ENCODE measurements at regions of chr19 and their contacts with region 1.

Region 1: DNA sequence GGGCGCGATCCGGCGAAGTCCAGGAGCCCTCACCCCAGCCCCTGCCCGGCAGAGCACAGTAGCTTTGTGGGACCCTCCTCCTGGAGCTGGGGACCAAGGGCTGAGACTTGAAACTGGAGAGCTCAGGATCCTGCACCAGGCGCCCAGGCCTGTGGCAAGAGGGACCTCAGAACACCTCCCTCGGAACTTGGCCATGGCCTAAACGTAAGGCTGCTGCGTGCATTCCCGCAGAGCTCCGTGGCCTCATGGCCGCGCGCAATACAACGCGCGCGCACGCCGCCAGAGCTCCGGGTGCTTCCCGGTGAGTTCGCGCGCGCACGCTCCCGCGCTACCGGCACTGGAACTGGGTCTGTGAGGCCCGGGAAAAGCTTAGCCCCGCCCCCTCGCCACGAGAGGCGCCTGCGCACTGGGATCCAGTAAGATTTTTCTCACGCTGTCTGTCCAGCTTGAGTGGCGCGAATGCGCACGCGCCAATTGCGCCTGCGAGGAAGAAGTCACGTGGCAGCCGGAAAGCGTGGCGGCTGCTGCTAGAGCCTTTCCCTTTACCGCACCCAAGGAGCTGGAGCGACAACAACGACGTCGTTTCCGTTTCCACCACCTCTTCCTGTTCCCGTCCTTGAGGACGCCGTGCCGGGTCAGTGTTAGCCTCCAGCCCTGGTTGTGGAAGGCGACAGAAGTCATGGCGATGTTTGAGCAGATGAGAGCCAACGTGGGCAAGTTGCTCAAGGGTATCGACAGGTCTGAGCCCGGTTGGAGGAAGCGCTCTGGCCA is at the start of gene EIF3K:
- DNase-seq: peak; percentile 92 to 100 (median 96)
- ATAC-seq: peak; percentile 63
- H3K4me3 ChIP-seq: peak within 1 kb of the TSS; percentile 97
- H3K4me3 Mint-ChIP-seq: peak within 1 kb of the TSS; percentile 97
- H3K27ac ChIP-seq: peak within 1 kb of the TSS; percentile 84 to 94
- H3K27ac Mint-ChIP-seq: peak within 1 kb of the TSS; percentile 94
- H3K4me1 ChIP-seq: peaks cover 62% of the 10 kb centered on the region
- H3K4me1 Mint-ChIP-seq: peaks cover 59% of the 10 kb centered on the region
- H3K27me3 ChIP-seq: no peaks in the 10 kb centered on the region
- H3K27me3 Mint-ChIP-seq: no peaks in the 10 kb centered on the region
- CTCF ChIP-seq: no peak
- total RNA-seq, gene EIF3K: 309 to 322 TPM

Region 2: GRCh38 chr19:38514812-38515633 is 103.8 kb before region 1 on chr19:
- CTCF ChIA-PET with region 1: interaction called, 5 read pairs
- POLR2A ChIA-PET with region 1: interaction called, 4 read pairs
- intact Hi-C with region 1: loop called in 1 of 2 experiments (anchors 5 kb)
- DNase-seq: peak; percentile 62 to 88 (median 76)
- ATAC-seq: peak; percentile 98
- H3K4me3 ChIP-seq: no peak overlapping the region
- H3K4me3 Mint-ChIP-seq: no peak overlapping the region
- H3K27ac ChIP-seq: no peak overlapping the region
- H3K27ac Mint-ChIP-seq: no peak overlapping the region
- H3K4me1 ChIP-seq: peaks cover 15% of the 10 kb centered on the region
- H3K4me1 Mint-ChIP-seq: peaks cover 9% of the 10 kb centered on the region
- H3K27me3 ChIP-seq: no peaks in the 10 kb centered on the region
- H3K27me3 Mint-ChIP-seq: no peaks in the 10 kb centered on the region
- CTCF ChIP-seq: peak; percentile 94

Region 3: GRCh38 chr19:38538793-38539528 is 79.8 kb before region 1 on chr19:
- CTCF ChIA-PET with region 1: interaction called, 4 read pairs
- POLR2A ChIA-PET with region 1: interaction called, 22 read pairs
- intact Hi-C with region 1: loop called in 1 of 2 experiments (anchors 5 kb)
- DNase-seq: peak in 6 of 14 experiments; percentile 13 to 87 (median 68)
- ATAC-seq: peak; percentile 91
- H3K4me3 ChIP-seq: no peak overlapping the region
- H3K4me3 Mint-ChIP-seq: peak overlapping the region; percentile 46
- H3K27ac ChIP-seq: no peak overlapping the region
- H3K27ac Mint-ChIP-seq: peak overlapping the region; percentile 74
- H3K4me1 ChIP-seq: peaks cover 46% of the 10 kb centered on the region
- H3K4me1 Mint-ChIP-seq: peaks cover 48% of the 10 kb centered on the region
- H3K27me3 ChIP-seq: no peaks in the 10 kb centered on the region
- H3K27me3 Mint-ChIP-seq: no peaks in the 10 kb centered on the region
- CTCF ChIP-seq: no peak

Region 4: GRCh38 chr19:38544034-38544958 is 74.5 kb before region 1 on chr19:
- CTCF ChIA-PET with region 1: interaction called, 4 read pairs
- POLR2A ChIA-PET with region 1: interaction called, 22 read pairs
- intact Hi-C with region 1: loop called (anchors 5 kb)
- DNase-seq: peak in 5 of 14 experiments; percentile 12 to 85 (median 75)
- ATAC-seq: peak; percentile 92
- H3K4me3 ChIP-seq: no peak overlapping the region
- H3K4me3 Mint-ChIP-seq: no peak overlapping the region
- H3K27ac ChIP-seq: no peak overlapping the region
- H3K27ac Mint-ChIP-seq: peak overlapping the region; percentile 0
- H3K4me1 ChIP-seq: peaks cover 24% of the 10 kb centered on the region
- H3K4me1 Mint-ChIP-seq: peaks cover 24% of the 10 kb centered on the region
- H3K27me3 ChIP-seq: no peaks in the 10 kb centered on the region
- H3K27me3 Mint-ChIP-seq: no peaks in the 10 kb centered on the region
- CTCF ChIP-seq: peak; percentile 81

Region 5: DNA sequence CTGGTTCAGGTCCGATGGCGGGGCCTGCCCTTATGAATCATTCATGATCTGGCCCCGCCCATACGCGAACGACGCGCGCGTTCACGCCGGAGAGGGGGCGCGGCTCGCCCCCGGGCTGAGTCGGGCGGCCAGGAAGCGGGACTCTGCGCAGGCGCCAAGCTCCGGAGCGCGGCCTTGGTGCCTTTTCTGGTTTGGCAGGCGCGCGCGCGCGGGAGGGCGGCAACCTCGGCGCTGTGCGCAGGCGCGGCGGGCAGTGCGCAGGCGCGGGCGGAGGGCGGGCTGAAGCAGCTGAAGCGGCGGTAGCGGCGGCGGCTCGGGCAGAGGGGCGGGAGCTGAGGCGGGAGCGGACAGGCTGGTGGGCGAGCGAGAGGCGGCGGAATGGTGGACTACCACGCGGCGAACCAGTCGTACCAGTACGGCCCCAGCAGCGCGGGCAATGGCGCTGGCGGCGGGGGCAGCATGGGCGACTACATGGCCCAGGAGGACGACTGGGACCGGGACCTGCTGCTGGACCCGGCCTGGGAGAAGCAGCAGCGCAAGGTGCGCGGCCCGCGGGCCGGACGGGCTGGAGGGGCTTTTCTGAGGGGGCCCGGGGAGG is 28.7 kb after region 1 on chr19 and contains the start of gene ACTN4:
- CTCF ChIA-PET with region 1: no interaction called
- POLR2A ChIA-PET with region 1: interaction called, 13 read pairs
- intact Hi-C with region 1: loop called in 1 of 2 experiments (anchors 1 kb)
- DNase-seq: peak; percentile 99 to 100 (median 100)
- ATAC-seq: peak; percentile 92
- H3K4me3 ChIP-seq: peak within 1 kb of the TSS; percentile 96
- H3K4me3 Mint-ChIP-seq: peak within 1 kb of the TSS; percentile 85
- H3K27ac ChIP-seq: peak within 1 kb of the TSS; percentile 21 to 41
- H3K27ac Mint-ChIP-seq: peak within 1 kb of the TSS; percentile 75
- H3K4me1 ChIP-seq: peaks cover 50% of the 10 kb centered on the region
- H3K4me1 Mint-ChIP-seq: peaks cover 37% of the 10 kb centered on the region
- H3K27me3 ChIP-seq: peaks cover 3 to 9% of the 10 kb centered on the region in 2 experiments
- H3K27me3 Mint-ChIP-seq: peaks cover 37% of the 10 kb centered on the region
- CTCF ChIP-seq: no peak
- total RNA-seq, gene ACTN4: 70.3 to 84.0 TPM

Region 6: GRCh38 chr19:38739440-38740256 is 120.9 kb after region 1 on chr19:
- CTCF ChIA-PET with region 1: no interaction called
- POLR2A ChIA-PET with region 1: no interaction called
- intact Hi-C with region 1: no loop called
- DNase-seq: peak in 3 of 14 experiments; percentile 19 to 44 (median 33)
- ATAC-seq: no peak
- H3K4me3 ChIP-seq: no peak overlapping the region
- H3K4me3 Mint-ChIP-seq: peak overlapping the region; percentile 20
- H3K27ac ChIP-seq: no peak overlapping the region
- H3K27ac Mint-ChIP-seq: no peak overlapping the region
- H3K4me1 ChIP-seq: peaks cover 49% of the 10 kb centered on the region
- H3K4me1 Mint-ChIP-seq: peaks cover 35% of the 10 kb centered on the region
- H3K27me3 ChIP-seq: no peaks in the 10 kb centered on the region
- H3K27me3 Mint-ChIP-seq: peaks cover 5% of the 10 kb centered on the region
- CTCF ChIP-seq: no peak

Region 7: DNA sequence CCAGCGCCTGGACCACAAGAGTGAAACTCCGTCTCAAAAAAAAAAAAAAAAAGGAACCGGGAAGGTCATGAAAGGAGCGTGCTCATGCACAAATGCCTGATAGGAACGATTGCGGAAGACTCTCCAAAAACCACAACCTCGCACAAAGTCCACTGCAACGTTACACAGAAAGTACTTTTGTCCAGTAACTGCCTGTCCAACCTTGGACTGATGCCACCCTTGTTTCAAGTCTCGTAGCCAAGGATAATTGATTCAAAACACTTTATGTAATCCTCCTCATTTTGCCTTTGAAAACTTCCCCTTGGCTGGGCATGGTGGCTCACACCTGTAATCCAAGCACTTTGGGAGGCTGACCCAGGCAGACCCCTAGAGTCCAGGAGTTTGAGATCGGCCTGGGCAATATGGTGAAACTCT is 140.8 kb after region 1 on chr19:
- CTCF ChIA-PET with region 1: no interaction called
- POLR2A ChIA-PET with region 1: no interaction called
- intact Hi-C with region 1: no loop called
- DNase-seq: no peak
- ATAC-seq: no peak
- H3K4me3 ChIP-seq: no peak overlapping the region
- H3K4me3 Mint-ChIP-seq: no peak overlapping the region
- H3K27ac ChIP-seq: no peak overlapping the region
- H3K27ac Mint-ChIP-seq: no peak overlapping the region
- H3K4me1 ChIP-seq: peaks cover 7% of the 10 kb centered on the region
- H3K4me1 Mint-ChIP-seq: no peaks in the 10 kb centered on the region
- H3K27me3 ChIP-seq: no peaks in the 10 kb centered on the region
- H3K27me3 Mint-ChIP-seq: no peaks in the 10 kb centered on the region
- CTCF ChIP-seq: no peak

Region 8: DNA sequence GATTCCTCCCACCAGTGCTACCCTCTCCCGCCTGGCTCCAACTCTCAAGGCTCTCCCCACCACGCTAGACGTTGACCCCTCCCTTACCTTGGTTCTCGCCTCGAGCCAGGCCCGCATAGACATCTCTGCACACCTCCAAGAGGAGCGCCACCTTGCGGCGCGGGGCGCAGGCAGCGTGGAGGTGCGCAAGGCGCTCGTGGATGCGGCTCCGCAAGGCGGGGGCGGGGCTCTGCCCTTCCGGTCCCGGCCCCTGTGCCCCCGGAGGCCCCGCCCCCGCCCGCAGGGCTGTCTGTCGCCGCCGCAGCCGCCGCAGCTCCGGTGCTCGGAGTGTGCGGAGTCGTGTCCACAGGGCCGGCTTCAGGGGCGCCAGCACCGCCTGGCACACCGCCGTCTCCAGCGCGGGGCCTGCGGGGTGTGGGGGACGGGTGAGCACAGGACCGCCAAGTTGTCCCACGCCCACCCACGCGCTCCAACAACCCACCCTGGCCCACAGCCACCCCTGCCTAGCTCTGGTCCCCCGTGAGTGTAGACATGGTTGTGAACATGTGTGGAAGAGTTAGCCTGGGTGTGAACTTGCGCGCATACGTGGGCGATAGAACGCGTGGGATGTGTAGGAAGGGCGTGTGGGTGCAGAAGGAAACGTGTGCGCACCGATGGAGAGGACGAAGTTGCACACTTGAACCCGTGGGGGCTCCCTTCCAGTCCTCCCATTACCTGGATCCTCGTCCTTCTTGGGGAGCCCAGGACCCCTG is 251.3 kb after region 1 on chr19:
- CTCF ChIA-PET with region 1: no interaction called
- POLR2A ChIA-PET with region 1: no interaction called
- intact Hi-C with region 1: no loop called
- DNase-seq: peak; percentile 87 to 98 (median 95)
- ATAC-seq: peak; percentile 93
- H3K4me3 ChIP-seq: peak overlapping the region; percentile 72
- H3K4me3 Mint-ChIP-seq: peak overlapping the region; percentile 86
- H3K27ac ChIP-seq: peak overlapping the region; percentile 62 to 72
- H3K27ac Mint-ChIP-seq: peak overlapping the region; percentile 86
- H3K4me1 ChIP-seq: peaks cover 52% of the 10 kb centered on the region
- H3K4me1 Mint-ChIP-seq: peaks cover 66% of the 10 kb centered on the region
- H3K27me3 ChIP-seq: no peaks in the 10 kb centered on the region
- H3K27me3 Mint-ChIP-seq: no peaks in the 10 kb centered on the region
- CTCF ChIP-seq: peak; percentile 88